ENCODE measurements at regions of chr2 and their contacts with region 1.

Region 1: GRCh38 chr2:68857855-68858456 is 13.2 kb downstream of the BMP10 start:
- DNase-seq: no peak
- ATAC-seq: peak; percentile 78
- H3K4me3 Mint-ChIP-seq: no peak overlapping the region
- H3K27ac Mint-ChIP-seq: no peak overlapping the region
- H3K4me1 Mint-ChIP-seq: peaks cover 9% of the 10 kb centered on the region
- H3K27me3 Mint-ChIP-seq: no peaks in the 10 kb centered on the region

Region 2: GRCh38 chr2:68662466-68662865 is 195.5 kb before region 1 on chr2:
- CTCF ChIA-PET with region 1: no interaction called
- POLR2A ChIA-PET with region 1: no interaction called
- intact Hi-C with region 1: no loop called
- DNase-seq: no peak
- ATAC-seq: no peak
- H3K4me3 Mint-ChIP-seq: no peak overlapping the region
- H3K27ac Mint-ChIP-seq: no peak overlapping the region
- H3K4me1 Mint-ChIP-seq: peaks cover 23% of the 10 kb centered on the region
- H3K27me3 Mint-ChIP-seq: peaks cover 23% of the 10 kb centered on the region

Region 3: GRCh38 chr2:68870215-68870614 is 12.3 kb after region 1 on chr2:
- CTCF ChIA-PET with region 1: interaction called, 15 read pairs
- POLR2A ChIA-PET with region 1: no interaction called
- intact Hi-C with region 1: no loop called
- DNase-seq: no peak
- ATAC-seq: no peak
- H3K4me3 Mint-ChIP-seq: no peak overlapping the region
- H3K27ac Mint-ChIP-seq: no peak overlapping the region
- H3K4me1 Mint-ChIP-seq: no peaks in the 10 kb centered on the region
- H3K27me3 Mint-ChIP-seq: peaks cover 4% of the 10 kb centered on the region

Region 4: DNA sequence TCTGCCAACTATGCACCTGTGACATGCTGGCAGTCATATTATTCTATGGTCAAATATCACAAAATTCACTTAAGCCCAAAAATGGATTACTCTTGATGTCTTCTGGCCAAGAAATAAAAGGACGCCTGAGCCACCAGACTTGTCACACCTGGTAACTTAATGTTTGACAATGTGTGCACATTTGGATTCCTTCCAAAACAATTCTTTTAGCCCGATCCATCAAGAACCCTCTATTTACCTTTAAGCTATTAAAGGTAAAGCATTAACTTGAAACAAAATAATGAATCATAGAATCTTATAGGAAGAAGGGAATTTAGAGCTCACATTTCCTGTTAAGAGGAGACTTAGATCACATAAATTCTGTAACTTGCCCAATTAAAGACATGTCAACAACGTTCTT is 625.7 kb after region 1 on chr2:
- CTCF ChIA-PET with region 1: no interaction called
- POLR2A ChIA-PET with region 1: no interaction called
- intact Hi-C with region 1: no loop called
- DNase-seq: no peak
- ATAC-seq: no peak
- H3K4me3 Mint-ChIP-seq: no peak overlapping the region
- H3K27ac Mint-ChIP-seq: no peak overlapping the region
- H3K4me1 Mint-ChIP-seq: peaks cover 36% of the 10 kb centered on the region
- H3K27me3 Mint-ChIP-seq: no peaks in the 10 kb centered on the region

Measured in activated CD4-positive, alpha-beta T cell treated with anti-CD3 and anti-CD28 coated beads for 36 hours (primary cell).